Sigmoid colon (tissue), 7 donors: ENCODE measurements at regions of chr17 and their contacts with region 1.

Region 1: GRCh38 chr17:19867064-19867313 is 747 bp downstream of the ULK2 start:
- DNase-seq: peak; percentile 86
- H3K4me3 ChIP-seq: peak overlapping the region; percentile 81 to 98 (median 92)
- H3K27ac ChIP-seq: peak overlapping the region; percentile 87 to 89 (median 89)
- H3K4me1 ChIP-seq: peaks cover 0 to 23% (median 11%) of the 10 kb centered on the region in 4 donors
- H3K27me3 ChIP-seq: no peaks in the 10 kb centered on the region
- CTCF ChIP-seq: peak in 2 of 4 experiments; percentile 30 to 33
- EP300 ChIP-seq: no peak
- POLR2A ChIP-seq: no peak

Region 2: GRCh38 chr17:19977311-19978208 is 110.6 kb after region 1 on chr17 and contains the start of gene AKAP10:
- intact Hi-C with region 1: loop called (anchors 1 kb)
- DNase-seq: peak; percentile 95
- H3K4me3 ChIP-seq: peak within 1 kb of the TSS; percentile 68 to 95 (median 80)
- H3K27ac ChIP-seq: peak within 1 kb of the TSS; percentile 83 to 94 (median 90)
- H3K4me1 ChIP-seq: peaks cover 0 to 32% (median 29%) of the 10 kb centered on the region in 4 donors
- H3K27me3 ChIP-seq: no peaks in the 10 kb centered on the region
- CTCF ChIP-seq: no peak
- EP300 ChIP-seq: peak in 2 of 4 donors; percentile 37 to 53
- POLR2A ChIP-seq: peak; percentile 22 to 34
- total RNA-seq, gene AKAP10: 24.0 to 37.5 (median 30.9) TPM